Calu3 (cell line): ENCODE measurements at regions of chr10 and their contacts with region 1.

Region 1: GRCh38 chr10:6014241-6014761 is 37.0 kb upstream of the IL15RA start:
- DNase-seq: peak; percentile 64
- H3K4me3 Mint-ChIP-seq: no peak overlapping the region
- H3K27ac Mint-ChIP-seq: no peak overlapping the region
- H3K4me1 Mint-ChIP-seq: no peaks in the 10 kb centered on the region
- H3K27me3 Mint-ChIP-seq: peaks cover 42% of the 10 kb centered on the region
- CTCF ChIP-seq: peak; percentile 53

Region 2: GRCh38 chr10:6088721-6089390 is 74.6 kb after region 1 on chr10 and contains the start of gene RBM17:
- CTCF ChIA-PET with region 1: no interaction called
- intact Hi-C with region 1: loop called (anchors 5 kb)
- DNase-seq: peak; percentile 93
- H3K4me3 Mint-ChIP-seq: peak within 1 kb of the TSS; percentile 85
- H3K27ac Mint-ChIP-seq: peak within 1 kb of the TSS; percentile 56
- H3K4me1 Mint-ChIP-seq: peaks cover 43% of the 10 kb centered on the region
- H3K27me3 Mint-ChIP-seq: peaks cover 2% of the 10 kb centered on the region
- CTCF ChIP-seq: peak; percentile 100
- total RNA-seq, gene RBM17: 133 and 139 TPM in 2 replicates